ENCODE measurements at regions of chr22 and their contacts with region 1.

Region 1: GRCh38 chr22:50525390-50526068 is at the start of gene SCO2:
- DNase-seq: peak; percentile 96 to 98
- ATAC-seq: peak; percentile 84 to 90 (median 86)
- H3K4me3 ChIP-seq: peak within 1 kb of the TSS; percentile 95
- H3K27ac ChIP-seq: peak within 1 kb of the TSS; percentile 90
- H3K4me1 ChIP-seq: peaks cover 20% of the 10 kb centered on the region
- H3K27me3 ChIP-seq: peaks cover 0 to 18% (median 12%) of the 10 kb centered on the region in 3 donors
- CTCF ChIP-seq: peak; percentile 44
- total RNA-seq, gene SCO2: 0.97 TPM in 1 of 4 donors, not detected in the others

Region 2: DNA sequence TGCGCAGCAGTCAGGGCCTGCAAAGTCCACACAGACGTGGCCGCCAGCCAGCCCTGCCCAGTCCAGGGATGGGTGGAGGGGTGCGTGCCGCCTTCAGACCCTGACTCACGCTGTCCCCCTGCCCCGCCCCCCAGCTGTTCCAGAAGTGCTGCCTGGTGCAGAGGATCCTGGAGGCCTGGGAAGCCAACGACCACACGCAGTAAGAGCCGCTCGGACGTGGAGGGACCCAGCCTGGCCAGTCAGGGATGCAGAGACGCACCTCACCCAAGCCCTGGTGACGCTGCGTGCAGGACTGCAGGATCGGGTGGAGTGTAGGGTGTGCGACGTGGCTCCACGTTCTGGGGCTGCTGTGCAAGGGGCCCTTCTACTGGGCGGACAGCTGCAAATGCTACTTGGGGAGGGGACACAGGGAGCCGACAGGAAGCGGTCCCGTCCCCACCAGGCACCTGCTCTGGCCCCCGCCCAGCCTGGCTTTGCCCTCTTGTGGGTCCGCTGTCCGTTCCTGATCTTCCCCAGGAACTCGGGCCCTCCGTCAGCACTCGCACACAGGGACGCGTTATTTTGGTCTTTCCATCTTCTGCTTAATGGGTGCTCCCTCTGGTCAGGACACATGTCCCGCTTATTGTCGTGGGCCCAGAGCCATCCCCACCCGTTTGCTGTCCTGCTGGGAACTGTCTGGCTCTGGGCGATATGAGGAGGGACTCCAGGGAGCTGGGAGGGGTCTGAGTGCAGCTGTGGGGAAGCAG is 93.2 kb before region 1 on chr22:
- intact Hi-C with region 1: no loop called
- DNase-seq: peak in 1 of 2 donors; percentile 52
- ATAC-seq: peak in 2 of 4 donors; percentile 14 to 40
- H3K4me3 ChIP-seq: no peak overlapping the region
- H3K27ac ChIP-seq: no peak overlapping the region
- H3K4me1 ChIP-seq: no peaks in the 10 kb centered on the region
- H3K27me3 ChIP-seq: no peaks in the 10 kb centered on the region
- CTCF ChIP-seq: no peak

Region 3: GRCh38 chr22:50474668-50475492 is 50.6 kb before region 1 on chr22 and contains the start of gene SBF1:
- intact Hi-C with region 1: no loop called
- DNase-seq: peak; percentile 93 to 97
- ATAC-seq: peak; percentile 97 to 99 (median 98)
- H3K4me3 ChIP-seq: peak within 1 kb of the TSS; percentile 88
- H3K27ac ChIP-seq: peak within 1 kb of the TSS; percentile 69
- H3K4me1 ChIP-seq: peaks cover 39% of the 10 kb centered on the region
- H3K27me3 ChIP-seq: peaks cover 0 to 8% (median 6%) of the 10 kb centered on the region in 3 donors
- CTCF ChIP-seq: no peak
- total RNA-seq, gene SBF1: 75.3 to 98.0 (median 82.8) TPM

Region 4: DNA sequence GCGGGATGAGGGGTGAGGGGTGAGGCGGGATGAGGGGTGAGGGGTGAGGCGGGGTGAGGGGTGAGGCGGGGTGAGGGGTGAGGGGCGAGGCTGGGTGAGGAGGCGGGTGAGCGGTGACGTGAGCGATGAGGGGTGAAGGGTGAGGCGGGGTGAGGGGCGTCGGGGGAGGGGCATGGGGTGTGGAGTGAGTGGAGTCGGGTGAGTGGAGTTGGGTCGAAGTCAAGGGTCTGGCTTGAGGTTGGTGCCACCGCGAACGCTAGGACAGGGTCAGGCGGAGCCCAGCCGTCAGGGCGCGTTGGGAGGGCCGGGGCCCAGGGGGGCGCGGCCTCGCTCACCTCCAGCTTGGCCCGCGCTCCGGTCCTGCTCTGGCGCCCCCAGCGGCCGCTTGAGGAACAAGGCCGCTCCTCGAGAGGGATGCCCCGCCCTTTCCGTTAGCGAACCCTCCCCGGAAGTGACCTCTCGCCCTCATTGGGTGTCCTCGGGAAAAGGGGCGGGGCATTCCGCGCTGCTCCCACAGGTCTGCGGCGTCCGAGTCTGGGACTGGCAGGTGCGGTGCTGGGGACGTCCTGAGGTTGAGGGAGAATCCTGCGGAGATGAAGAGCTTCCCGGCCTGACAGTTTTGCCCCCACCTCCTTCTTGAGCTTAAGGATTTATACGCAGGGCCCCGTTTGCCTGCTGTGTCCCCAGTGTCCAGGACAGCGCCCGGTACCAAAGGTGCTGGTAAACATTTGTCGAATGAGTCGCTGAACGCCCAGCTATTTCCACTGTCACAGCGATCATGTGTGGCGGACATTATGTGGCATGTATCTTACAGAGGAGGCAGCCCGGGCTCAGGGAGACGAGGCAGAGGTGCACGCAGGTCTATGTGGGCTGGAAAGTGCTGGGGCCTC is 37.2 kb after region 1 on chr22 and contains the start of gene SYCE3:
- intact Hi-C with region 1: loop called in 1 of 2 experiments (anchors 5 kb)
- DNase-seq: peak; percentile 95 to 99
- ATAC-seq: peak; percentile 96 to 99 (median 96)
- H3K4me3 ChIP-seq: peak within 1 kb of the TSS; percentile 72
- H3K27ac ChIP-seq: peak within 1 kb of the TSS; percentile 78
- H3K4me1 ChIP-seq: peaks cover 5% of the 10 kb centered on the region
- H3K27me3 ChIP-seq: no peaks in the 10 kb centered on the region
- CTCF ChIP-seq: peak; percentile 96
- total RNA-seq, gene SYCE3: not detected